ENCODE measurements at regions of chr19 and their contacts with region 1.

Region 1: GRCh38 chr19:38162094-38162493 is 61.9 kb downstream of the DPF1 start:
- DNase-seq: peak; percentile 87
- H3K4me3 ChIP-seq: no peak overlapping the region
- H3K27ac ChIP-seq: peak overlapping the region; percentile 42
- H3K4me1 ChIP-seq: peaks cover 13% of the 10 kb centered on the region
- H3K27me3 ChIP-seq: no peaks in the 10 kb centered on the region
- CTCF ChIP-seq: no peak

Region 2: DNA sequence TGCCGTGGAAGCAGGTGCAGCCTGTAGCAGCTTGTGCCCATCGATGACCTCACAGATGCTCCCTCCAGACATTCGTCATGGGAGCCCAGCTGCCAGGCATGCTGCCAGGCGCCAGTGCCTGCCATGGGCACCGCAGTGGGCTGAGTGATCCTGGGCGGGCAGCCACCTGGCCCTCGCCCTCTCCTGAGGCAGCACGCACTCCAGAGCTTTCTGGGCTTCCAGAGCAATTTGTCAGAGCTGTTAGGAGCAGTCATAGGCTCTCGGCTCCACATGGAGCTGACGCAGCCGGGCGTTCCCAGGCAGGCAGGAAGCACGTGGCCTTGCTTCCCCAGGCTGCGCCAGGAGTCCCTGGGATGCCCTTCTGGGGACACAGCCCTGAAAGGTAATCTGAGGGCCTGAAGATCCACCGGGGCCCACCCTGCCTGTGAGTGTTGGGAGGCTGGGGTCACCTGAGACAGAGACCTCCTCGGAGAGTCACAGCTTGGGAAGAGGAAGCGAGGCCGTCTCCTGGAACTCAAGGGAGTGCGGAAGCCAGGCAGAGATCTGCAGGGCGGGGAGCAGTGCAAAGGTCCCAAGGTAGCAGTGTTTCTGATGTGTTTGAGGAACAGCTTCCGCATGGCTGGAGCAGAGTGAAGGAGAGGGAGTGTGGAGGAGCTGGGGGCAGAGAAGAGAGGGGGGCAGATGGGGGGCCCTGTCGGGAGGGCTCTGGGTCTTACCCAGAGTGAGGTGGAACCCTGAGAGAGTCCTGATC is 11.4 kb after region 1 on chr19:
- CTCF ChIA-PET with region 1: no interaction called
- dilution Hi-C with region 1: no loop called
- in situ Hi-C with region 1: no loop called
- intact Hi-C with region 1: loop called (anchors 1 kb)
- DNase-seq: peak; percentile 96
- H3K4me3 ChIP-seq: peak overlapping the region; percentile 3 to 25 (median 14)
- H3K27ac ChIP-seq: peak overlapping the region; percentile 71
- H3K4me1 ChIP-seq: peaks cover 16% of the 10 kb centered on the region
- H3K27me3 ChIP-seq: no peaks in the 10 kb centered on the region
- CTCF ChIP-seq: no peak